ENCODE measurements at regions of chr15 and their contacts with region 1.

Region 1: DNA sequence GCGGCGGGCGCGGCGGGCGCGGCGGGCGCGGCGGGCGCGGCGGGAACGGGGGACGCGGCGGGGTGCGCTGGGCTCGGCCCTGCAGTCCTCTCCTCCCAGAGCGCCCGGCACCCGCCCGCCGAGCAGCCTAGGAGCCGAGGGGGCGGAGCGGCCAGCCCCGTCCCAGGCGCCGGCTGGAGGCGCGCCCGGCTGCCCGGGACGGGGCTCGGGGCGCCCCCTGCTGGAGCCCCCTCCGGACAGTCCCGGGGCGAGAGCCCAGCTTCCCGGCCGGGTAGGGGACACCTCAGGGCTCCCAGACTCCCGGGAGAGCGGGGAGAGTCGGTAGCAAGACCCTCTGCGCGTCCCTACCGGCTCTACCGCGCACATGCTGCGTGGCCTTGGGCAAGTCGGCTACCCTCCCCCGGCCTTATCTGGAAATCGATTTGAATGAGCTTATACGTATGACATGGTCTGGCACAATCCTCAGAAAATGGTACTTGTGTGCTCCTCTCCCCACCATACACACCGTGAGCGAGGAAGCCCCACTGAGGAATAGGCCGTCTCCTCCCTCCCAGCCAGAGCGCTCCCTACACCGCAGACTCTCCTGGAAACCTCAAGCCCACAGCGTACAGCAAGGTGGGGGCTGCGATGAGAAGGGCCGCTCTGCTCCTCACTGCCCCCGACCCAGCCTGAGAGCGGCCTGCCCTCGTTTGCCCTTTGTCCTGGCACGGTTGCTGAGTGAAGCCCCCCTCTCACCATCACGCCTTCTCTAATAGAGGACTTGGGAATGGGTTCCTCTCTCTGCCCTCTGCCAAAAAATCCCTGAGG is at the start of gene DAPK2:
- DNase-seq: peak; percentile 68 to 83
- ATAC-seq: peak; percentile 88 to 95 (median 90)
- H3K4me3 ChIP-seq: peak within 1 kb of the TSS; percentile 61 to 91 (median 72)
- H3K27ac ChIP-seq: peak within 1 kb of the TSS; percentile 48 to 86 (median 82)
- H3K4me1 ChIP-seq: peaks cover 2 to 69% (median 40%) of the 10 kb centered on the region in 9 donors
- H3K27me3 ChIP-seq: peaks cover 0 to 8% (median 0%) of the 10 kb centered on the region in 7 donors
- CTCF ChIP-seq: peak; percentile 73 to 94 (median 88)
- total RNA-seq, gene DAPK2: 20.8 to 62.6 (median 38.5) TPM

Region 2: GRCh38 chr15:63826528-63826927 is 220.0 kb before region 1 on chr15:
- intact Hi-C with region 1: loop called in 3 of 10 experiments (anchors 5 to 10 kb)
- DNase-seq: no peak
- ATAC-seq: no peak
- H3K4me3 ChIP-seq: no peak overlapping the region
- H3K27ac ChIP-seq: no peak overlapping the region
- H3K4me1 ChIP-seq: peaks cover 2 to 74% (median 32%) of the 10 kb centered on the region in 9 donors
- H3K27me3 ChIP-seq: no peaks in the 10 kb centered on the region
- CTCF ChIP-seq: peak in 5 of 9 donors; percentile 19 to 43 (median 34)

Region 3: DNA sequence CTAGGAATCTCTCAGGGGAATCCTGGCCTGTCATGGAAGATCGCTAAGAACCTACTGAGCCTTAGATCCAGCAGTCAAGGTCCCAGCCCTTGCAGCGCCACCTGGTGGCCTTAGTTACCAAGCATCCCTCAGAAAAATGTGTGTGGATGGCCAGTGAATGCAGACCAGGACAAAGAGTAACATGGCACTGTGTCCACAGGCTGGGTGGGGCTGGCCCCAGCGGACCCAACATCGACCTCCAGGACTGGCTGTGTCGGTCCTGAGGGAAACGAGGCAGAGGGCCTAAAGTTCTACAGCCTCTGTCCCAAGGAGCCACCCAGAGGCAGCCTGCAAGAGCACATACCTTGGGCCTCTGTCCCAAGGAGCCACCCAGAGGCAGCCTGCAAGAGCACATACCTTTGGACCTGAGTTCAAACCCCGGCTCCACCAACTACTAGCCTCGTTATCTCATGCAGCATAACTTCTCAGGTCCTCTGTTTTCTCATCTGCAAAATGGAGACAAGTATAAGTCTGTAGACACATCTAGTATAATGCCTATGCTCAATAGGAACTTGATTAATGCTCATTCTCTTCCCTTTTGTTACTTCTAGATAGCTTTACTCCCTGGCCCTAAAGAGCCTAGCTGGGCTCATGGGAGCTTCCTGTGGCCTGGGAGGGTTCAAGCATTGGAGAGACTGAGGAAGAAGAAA is 155.3 kb before region 1 on chr15:
- intact Hi-C with region 1: loop called in 3 of 10 experiments (anchors 5 to 10 kb)
- DNase-seq: peak; percentile 81
- ATAC-seq: peak; percentile 70 to 91 (median 77)
- H3K4me3 ChIP-seq: no peak overlapping the region
- H3K27ac ChIP-seq: peak overlapping the region in 1 of 10 donors; percentile 36
- H3K4me1 ChIP-seq: peaks cover 0 to 76% (median 21%) of the 10 kb centered on the region in 9 donors
- H3K27me3 ChIP-seq: no peaks in the 10 kb centered on the region
- CTCF ChIP-seq: peak; percentile 80 to 92 (median 90)

Region 4: GRCh38 chr15:63902671-63903035 is 143.9 kb before region 1 on chr15:
- intact Hi-C with region 1: loop called in 3 of 10 experiments (anchors 5 to 10 kb)
- DNase-seq: no peak
- ATAC-seq: no peak
- H3K4me3 ChIP-seq: no peak overlapping the region
- H3K27ac ChIP-seq: no peak overlapping the region
- H3K4me1 ChIP-seq: peaks cover 0 to 55% (median 6%) of the 10 kb centered on the region in 9 donors
- H3K27me3 ChIP-seq: no peaks in the 10 kb centered on the region
- CTCF ChIP-seq: no peak

Region 5: DNA sequence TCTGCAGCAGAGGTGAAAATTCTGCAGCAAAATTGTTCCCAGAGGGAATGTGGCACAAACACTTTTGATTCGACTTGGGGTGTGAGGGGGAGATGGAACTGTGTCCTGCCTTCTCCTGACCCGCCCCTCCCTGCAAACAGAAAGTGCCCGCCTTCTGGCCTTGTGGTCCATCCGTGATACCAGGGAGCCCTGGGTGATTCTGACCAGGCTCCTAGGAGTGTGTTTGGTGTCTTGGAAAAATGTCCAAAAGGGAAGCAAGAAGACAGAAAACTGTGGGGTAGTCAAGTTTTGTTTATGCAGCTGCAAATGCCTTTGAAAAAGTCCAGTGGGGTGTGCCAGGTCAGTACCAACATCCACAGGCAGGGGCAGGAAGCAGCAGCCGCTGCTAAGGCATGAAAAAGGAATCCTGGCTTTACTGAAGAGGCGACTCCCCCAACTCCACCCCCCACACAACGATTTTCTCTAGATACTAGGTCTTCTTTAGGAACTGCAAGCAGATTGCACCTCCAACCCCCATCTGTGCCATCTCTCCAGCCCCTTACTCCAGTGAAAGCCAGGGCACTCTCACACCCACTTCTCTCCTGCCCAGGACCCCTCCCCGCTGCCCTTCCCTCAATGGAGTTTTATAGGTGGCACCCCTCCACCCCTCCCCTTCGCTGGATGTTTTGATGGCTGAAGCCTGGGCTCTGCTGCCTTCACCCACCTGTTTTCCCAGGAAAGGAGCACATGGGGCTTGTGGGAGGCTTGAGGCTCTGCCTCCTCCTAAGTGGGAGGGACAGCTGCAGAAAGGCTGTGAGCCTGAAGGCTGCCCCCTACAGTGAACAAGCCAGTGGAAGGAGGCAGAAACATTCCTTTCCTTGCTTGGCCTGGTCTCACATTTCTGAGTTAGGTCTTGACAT is 130.4 kb before region 1 on chr15:
- intact Hi-C with region 1: loop called in 5 of 10 experiments (anchors 5 to 10 kb)
- DNase-seq: no peak
- ATAC-seq: peak in 7 of 8 donors; percentile 29 to 66 (median 50)
- H3K4me3 ChIP-seq: no peak overlapping the region
- H3K27ac ChIP-seq: peak overlapping the region in 7 of 10 donors; percentile 27 to 83 (median 76)
- H3K4me1 ChIP-seq: peaks cover 8 to 55% (median 28%) of the 10 kb centered on the region in 9 donors
- H3K27me3 ChIP-seq: no peaks in the 10 kb centered on the region
- CTCF ChIP-seq: peak in 6 of 9 donors; percentile 35 to 49 (median 38)

Region 6: GRCh38 chr15:63986751-63987341 is 59.7 kb before region 1 on chr15:
- intact Hi-C with region 1: loop called in 1 of 10 experiments (anchors 5 kb)
- DNase-seq: no peak
- ATAC-seq: no peak
- H3K4me3 ChIP-seq: no peak overlapping the region
- H3K27ac ChIP-seq: peak overlapping the region; percentile 76 to 91 (median 88)
- H3K4me1 ChIP-seq: peaks cover 43 to 88% (median 79%) of the 10 kb centered on the region in 9 donors
- H3K27me3 ChIP-seq: no peaks in the 10 kb centered on the region
- CTCF ChIP-seq: no peak

Region 7: DNA sequence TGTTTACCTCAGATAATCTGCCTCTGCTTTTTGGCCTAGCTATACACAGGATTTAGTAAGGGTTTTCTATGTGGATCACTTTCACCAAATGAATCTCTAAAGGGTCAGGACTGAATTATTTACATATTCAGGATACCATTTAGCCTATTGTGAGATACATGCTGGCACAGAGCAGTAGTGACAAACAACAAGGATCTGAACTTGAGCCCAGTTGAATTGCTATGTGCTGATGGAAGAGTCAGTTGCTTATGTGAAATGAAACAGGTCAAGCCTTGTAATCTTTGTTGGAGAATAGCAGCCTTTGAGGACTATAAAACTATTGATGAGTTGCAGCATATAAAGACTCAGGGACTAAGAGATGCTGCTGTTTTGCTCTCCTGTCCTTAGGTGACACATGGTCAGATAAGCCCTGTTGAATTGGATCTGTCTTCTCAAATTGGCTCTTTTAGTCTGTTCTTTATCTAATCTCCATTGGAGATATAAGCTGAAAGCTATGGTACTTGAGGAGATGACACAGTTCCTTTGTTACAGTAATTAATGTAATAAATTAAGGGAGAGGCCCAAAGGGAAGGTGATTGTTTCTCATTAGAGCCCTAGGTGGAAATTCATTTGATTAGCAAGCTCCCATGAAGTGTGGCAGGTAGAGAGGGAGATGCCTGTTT is 444.2 kb after region 1 on chr15:
- intact Hi-C with region 1: no loop called
- DNase-seq: no peak
- ATAC-seq: peak in 3 of 8 donors; percentile 44 to 56 (median 44)
- H3K4me3 ChIP-seq: no peak overlapping the region
- H3K27ac ChIP-seq: no peak overlapping the region
- H3K4me1 ChIP-seq: peaks cover 0 to 19% (median 0%) of the 10 kb centered on the region in 9 donors
- H3K27me3 ChIP-seq: no peaks in the 10 kb centered on the region
- CTCF ChIP-seq: no peak

Region 8: DNA sequence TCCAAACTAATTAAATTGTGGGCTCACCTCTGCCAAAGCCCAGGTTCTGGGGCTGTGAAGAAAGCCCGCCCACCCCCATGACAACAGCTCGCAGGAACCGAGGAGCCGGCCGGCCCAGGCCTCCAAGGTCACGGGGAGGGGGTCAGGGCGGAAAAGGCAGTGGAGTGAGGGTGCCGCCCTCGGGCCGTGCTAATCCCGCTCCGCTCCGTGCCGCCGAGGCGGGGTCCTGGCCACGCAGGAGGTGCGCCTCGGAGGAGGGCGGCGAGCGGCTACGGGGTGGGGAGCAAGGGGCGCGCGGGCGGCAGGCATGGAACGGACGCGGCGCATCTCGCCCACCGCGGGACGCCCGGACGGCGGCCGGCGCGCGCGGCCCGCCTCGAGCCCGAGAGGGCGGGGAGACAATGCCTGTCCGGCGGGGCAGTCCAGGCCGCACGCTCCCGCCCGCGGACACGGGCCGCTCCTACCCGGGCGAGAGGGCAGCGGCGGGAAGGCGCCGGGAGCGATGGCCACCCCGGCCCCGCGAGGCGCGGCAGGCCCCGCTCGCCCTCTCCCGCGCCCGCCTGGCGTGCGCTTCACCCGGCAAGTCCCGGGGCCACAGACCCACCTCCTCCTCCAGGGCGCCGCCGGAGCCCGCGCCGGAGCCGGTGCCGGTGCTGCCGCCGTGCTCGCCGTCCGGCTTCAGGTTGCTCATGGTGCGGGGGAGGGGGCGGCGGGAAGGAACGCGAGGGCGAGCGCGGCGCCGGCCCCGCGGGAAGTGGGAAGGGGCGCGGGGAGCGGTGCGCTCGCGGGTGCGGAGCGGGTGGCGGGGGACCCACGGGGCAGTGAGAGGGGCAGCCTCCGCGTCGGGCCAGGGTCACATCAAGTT is 728.3 kb after region 1 on chr15:
- intact Hi-C with region 1: no loop called
- DNase-seq: peak; percentile 28 to 40
- ATAC-seq: peak; percentile 40 to 66 (median 56)
- H3K4me3 ChIP-seq: peak overlapping the region; percentile 44 to 92 (median 67)
- H3K27ac ChIP-seq: peak overlapping the region; percentile 81 to 96 (median 94)
- H3K4me1 ChIP-seq: peaks cover 0 to 52% (median 18%) of the 10 kb centered on the region in 9 donors
- H3K27me3 ChIP-seq: peaks cover 0 to 47% (median 0%) of the 10 kb centered on the region in 7 donors
- CTCF ChIP-seq: no peak

Measured in heart right ventricle (tissue), 16 donors.